ENCODE measurements at regions of chr17 and their contacts with region 1.

Region 1: DNA sequence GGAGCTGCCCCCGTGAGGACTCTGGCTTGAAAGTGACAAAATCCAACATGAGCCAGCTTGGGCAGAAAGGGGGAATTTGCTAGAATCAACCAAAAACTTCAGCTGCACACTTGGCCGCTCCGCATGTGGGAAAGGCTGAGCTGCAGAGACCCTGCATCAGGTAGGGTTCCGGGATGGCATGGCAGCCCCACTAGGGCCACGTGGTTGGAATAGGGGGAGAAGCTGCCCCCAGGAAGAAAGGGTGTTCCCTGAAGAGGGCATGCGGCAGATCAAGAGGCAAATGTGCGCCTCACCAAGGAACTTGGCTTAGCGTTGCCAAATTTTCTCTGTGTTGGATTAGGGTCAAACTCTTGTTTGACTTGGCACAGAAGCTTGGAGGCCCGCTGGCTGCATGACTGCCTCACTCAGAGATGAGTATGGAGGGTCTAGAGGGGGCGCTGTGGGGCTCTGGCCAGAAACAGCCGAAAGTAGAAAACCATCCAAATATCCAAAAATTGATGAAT is 29.2 kb upstream of the WFIKKN2 start:
- DNase-seq: no peak
- ATAC-seq: no peak
- H3K4me3 ChIP-seq: no peak overlapping the region
- H3K27ac ChIP-seq: no peak overlapping the region
- H3K4me1 ChIP-seq: peaks cover 4% of the 10 kb centered on the region; the same call in 1 of the 2 replicates
- H3K27me3 ChIP-seq: no peaks in the 10 kb centered on the region
- CTCF ChIP-seq: no peak

Region 2: DNA sequence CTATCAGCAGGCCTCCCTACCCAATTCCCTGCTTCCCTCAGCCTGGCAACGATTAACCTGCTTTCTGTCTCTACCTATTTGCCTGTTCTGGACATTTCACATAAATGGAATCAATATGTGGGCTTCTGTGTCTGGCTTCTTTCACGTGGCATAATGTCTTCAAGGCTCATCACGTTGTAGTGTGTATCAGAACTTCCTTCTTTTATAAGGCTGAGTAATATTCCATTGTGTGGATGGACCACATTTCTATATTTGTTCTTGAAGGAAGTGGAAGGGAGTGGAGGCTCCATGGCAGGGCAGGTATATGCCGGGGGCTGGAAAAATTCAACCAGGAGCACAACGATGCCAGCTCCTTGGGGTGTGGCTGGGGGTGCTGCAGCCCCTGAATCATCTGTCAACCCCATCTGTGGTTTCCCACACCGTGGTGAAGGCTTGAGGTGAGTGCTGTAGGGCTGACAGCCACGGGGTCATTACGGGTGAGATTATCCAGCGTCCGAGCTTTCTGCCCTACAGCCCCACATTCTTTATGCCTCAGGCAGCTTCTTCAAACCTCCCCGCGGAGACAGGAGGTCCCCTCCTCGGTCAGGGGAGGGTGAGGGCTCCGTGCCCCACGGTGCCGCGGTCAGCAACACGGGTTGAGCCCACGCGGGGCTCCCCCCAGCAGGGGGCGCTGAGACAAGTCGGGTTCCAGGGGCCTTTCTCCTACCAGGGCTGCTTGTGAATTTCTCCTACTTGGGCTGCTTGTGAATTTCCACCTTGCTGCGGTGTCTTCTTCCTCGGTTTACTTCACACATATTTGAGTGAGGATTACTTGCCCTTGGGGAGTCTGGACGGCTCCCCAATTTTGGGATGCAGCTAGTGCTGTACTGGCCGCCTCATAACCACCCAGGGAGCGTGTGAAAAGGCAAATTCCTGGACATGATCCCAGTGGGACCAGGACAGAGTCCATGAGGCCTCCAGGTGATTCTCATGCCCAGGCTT is 10.9 kb after region 1 on chr17:
- CTCF ChIA-PET with region 1: no interaction called
- POLR2A ChIA-PET with region 1: interaction called, 10 read pairs
- in situ Hi-C with region 1: no loop called
- intact Hi-C with region 1: no loop called
- DNase-seq: peak; percentile 7
- ATAC-seq: peak; percentile 73
- H3K4me3 ChIP-seq: peak overlapping the region; percentile 17 to 28
- H3K27ac ChIP-seq: no peak overlapping the region
- H3K4me1 ChIP-seq: no peaks in the 10 kb centered on the region
- H3K27me3 ChIP-seq: peaks cover 2% of the 10 kb centered on the region
- CTCF ChIP-seq: peak; percentile 97

Region 3: GRCh38 chr17:50944054-50944901 is 138.1 kb after region 1 on chr17:
- CTCF ChIA-PET with region 1: no interaction called
- POLR2A ChIA-PET with region 1: interaction called, 12 read pairs
- in situ Hi-C with region 1: no loop called
- intact Hi-C with region 1: no loop called
- DNase-seq: no peak
- ATAC-seq: peak; percentile 81
- H3K4me3 ChIP-seq: peak overlapping the region; percentile 31 to 42
- H3K27ac ChIP-seq: peak overlapping the region; percentile 87
- H3K4me1 ChIP-seq: peaks cover 49% of the 10 kb centered on the region
- H3K27me3 ChIP-seq: no peaks in the 10 kb centered on the region
- CTCF ChIP-seq: no peak

Region 4: DNA sequence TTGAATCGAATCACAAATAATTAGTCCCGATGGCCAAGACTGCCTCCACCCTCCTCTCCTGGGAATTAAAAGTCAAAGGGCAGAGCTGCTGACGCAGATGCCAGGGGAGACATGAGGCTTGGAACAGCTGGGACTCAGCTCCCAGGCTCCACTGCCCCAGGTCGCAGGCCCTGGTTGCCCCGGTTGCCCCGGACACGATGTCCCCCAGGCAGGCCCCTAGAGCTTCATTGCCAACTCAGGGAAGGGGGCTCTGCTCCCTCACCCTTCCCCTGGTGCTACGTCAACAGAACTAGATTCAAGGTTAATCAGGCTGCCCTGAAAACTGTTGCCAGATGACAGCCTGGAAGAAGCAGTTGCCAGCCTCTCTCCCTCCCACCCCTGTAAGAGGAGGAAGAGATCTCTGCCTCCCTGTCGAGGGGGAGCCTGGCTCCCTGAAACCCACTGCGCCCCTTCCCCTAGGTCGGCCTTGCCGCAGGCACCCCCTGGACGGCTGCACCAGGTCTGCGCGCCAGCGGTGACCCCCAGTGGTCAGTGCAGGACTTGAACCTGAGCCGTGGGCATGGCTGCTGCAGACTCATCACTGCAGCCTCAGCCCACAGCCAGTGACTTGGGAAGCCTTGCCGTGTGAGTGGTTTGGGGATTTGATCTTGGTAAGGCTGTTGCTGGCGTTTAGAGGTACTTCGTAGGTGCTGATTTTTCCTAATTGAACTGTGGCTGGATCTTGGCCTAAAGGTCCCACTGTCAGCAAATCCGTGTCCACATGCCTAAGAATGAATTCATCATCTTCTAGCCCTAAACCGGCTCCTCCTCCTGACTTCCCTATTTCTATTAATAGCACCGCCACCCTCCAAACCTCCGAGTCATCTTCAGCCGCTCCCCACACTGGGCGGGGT is 144.0 kb after region 1 on chr17:
- CTCF ChIA-PET with region 1: no interaction called
- POLR2A ChIA-PET with region 1: interaction called, 11 read pairs
- in situ Hi-C with region 1: no loop called
- intact Hi-C with region 1: no loop called
- DNase-seq: peak; percentile 67
- ATAC-seq: peak; percentile 86
- H3K4me3 ChIP-seq: peak overlapping the region in 1 of 2 experiments; percentile 15; a peak in 1 of 4 replicates
- H3K27ac ChIP-seq: peak overlapping the region; percentile 87
- H3K4me1 ChIP-seq: peaks cover 63% of the 10 kb centered on the region
- H3K27me3 ChIP-seq: no peaks in the 10 kb centered on the region
- CTCF ChIP-seq: peak; percentile 96

Region 5: DNA sequence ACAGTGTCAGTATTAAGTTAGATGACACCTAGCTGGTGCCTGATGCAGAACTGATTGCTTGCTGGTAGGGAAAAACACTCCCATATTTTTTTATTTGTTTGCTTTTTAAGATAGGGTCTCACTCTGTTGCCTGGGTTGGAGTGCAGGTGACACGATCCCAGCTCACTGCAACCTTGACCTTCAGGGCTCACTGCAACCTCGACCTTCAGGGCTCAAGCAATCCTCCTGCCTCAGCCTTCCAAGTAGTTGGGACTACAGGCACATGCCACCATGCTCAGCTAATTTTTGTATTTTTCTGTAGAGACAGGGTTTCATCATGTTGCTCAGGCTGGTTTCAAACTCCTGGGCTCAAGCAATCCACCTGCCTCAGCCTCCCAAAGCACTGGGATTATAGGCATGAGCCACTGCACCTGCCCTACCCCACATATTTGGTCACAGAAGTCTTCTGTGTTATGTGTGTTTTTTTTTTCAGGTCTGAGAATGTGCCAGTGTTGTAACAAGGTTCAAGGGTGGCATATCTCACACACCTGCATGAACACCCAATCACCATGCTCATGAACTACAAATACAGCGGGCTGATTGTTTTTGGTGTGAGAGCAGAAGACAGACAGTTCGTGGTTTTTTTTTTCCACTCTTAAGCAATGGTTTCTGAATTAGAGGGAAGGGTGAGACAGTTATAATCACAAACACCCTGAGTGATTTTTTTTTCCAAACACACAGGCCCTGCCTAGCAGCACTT is 291.7 kb after region 1 on chr17:
- CTCF ChIA-PET with region 1: no interaction called
- POLR2A ChIA-PET with region 1: no interaction called
- in situ Hi-C with region 1: no loop called
- intact Hi-C with region 1: no loop called
- DNase-seq: no peak
- ATAC-seq: no peak
- H3K4me3 ChIP-seq: no peak overlapping the region
- H3K27ac ChIP-seq: no peak overlapping the region
- H3K4me1 ChIP-seq: no peaks in the 10 kb centered on the region
- H3K27me3 ChIP-seq: no peaks in the 10 kb centered on the region
- CTCF ChIP-seq: no peak

Measured in Panc1 (cell line).